ENCODE measurements at regions of chr19 and their contacts with region 1.

Region 1: DNA sequence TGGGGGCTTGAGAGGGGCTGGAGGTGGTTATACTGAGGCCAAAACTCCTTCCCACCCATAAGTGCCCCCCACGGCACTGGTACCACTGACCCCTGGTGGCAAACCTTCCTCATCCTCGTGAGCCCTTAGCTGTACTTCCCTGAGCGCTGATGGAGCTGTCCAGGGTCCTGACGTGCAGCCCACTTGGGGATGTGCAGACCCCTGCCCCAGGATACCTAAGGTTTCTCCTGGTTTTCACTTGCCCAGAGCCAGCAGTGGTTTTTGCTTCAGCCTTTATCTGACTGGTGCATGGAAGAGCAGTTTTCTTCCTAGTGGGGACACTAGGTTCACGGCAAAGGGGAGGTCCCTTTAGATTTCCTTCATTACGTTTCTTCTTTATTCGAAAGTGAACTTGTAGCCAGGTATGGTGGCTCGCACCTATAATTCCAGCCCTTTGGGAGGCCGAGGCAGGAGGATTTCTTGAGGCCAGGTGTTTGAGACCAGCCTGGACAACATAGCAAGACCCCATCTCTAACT is 28.7 kb upstream of the KCTD15 start:
- DNase-seq: no peak
- H3K4me3 ChIP-seq: no peak overlapping the region
- H3K27ac ChIP-seq: no peak overlapping the region
- H3K4me1 ChIP-seq: no peaks in the 10 kb centered on the region
- H3K27me3 ChIP-seq: no peaks in the 10 kb centered on the region
- CTCF ChIP-seq: no peak
- POLR2A ChIP-seq: no peak

Region 2: DNA sequence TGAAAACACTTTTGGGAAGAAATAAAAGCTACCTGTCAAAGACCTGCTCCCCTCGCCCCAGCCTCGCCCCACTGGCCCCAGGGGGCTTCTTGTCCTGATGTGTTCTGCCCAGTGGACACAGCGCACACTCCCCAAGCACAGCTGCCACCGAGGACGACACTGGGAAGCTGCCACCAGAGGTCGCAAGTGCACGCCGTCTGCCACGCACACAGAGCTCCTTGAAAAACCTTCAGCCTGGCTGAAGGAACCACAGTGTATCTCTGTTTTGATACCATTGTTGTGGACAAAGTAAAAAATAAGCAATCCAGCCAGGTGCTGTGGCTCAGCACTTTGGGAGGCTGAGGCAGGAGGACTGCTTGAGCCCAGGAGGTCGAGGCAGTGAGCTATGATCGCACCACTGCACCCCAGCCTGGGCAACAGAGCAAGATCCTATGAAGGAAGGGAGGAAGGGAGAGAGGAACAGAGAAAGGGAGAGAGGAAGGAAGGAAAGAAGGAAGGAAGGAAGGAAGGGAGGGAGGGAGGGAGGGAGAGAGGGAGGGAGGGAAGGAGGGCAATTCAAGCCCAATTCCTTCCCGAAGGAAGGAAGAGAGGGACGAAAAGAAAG is 337.2 kb before region 1 on chr19:
- intact Hi-C with region 1: loop called (anchors 10 kb)
- DNase-seq: no peak
- H3K4me3 ChIP-seq: no peak overlapping the region
- H3K27ac ChIP-seq: no peak overlapping the region
- H3K4me1 ChIP-seq: no peaks in the 10 kb centered on the region
- H3K27me3 ChIP-seq: no peaks in the 10 kb centered on the region
- CTCF ChIP-seq: peak; percentile 24 to 56 (median 54)
- POLR2A ChIP-seq: no peak

Region 3: GRCh38 chr19:33905937-33906576 is 138.1 kb after region 1 on chr19:
- intact Hi-C with region 1: no loop called
- DNase-seq: no peak
- H3K4me3 ChIP-seq: peak overlapping the region; percentile 44 to 49
- H3K27ac ChIP-seq: peak overlapping the region; percentile 81
- H3K4me1 ChIP-seq: peaks cover 14% of the 10 kb centered on the region
- H3K27me3 ChIP-seq: no peaks in the 10 kb centered on the region
- CTCF ChIP-seq: no peak
- POLR2A ChIP-seq: no peak

Measured in vagina (tissue), 2 donors.